ENCODE measurements at regions of chr6 and their contacts with region 1.

Region 1: GRCh38 chr6:1604158-1605030 is 5.3 kb upstream of the FOXC1 start:
- DNase-seq: peak in 37 of 42 donors; percentile 21 to 85 (median 66)

Region 2: DNA sequence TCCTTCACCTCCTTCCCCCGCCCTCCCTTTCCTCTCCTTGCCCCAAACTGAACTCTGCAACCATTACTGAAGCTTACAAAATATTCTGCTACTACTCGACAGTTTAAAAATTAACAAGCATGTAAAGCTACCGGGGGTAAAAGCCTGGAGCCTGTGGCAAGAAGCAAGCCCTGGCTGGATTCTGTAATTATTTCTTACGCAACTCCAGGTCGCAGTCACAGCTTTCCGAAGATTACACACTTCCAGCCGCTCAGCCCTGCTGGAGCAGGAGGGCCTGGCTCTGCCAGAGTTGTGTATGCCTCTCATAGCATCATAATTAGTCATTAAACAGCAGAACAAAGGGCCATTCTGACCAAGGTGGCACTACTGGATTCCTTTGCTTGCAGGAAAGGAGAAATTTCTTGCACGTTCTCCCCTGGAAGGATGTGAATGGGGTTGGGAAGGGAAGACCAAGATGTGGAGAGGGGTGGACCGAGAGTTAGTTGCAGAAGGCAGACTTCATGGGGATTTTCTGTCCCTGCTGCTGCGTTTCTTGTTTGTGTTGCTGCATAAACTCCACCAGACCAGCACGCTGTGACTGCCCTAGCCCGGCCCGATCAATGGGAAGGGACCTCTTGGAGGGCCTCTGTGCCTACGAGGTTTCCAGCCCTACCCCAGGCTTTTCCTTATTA is 268.9 kb before region 1 on chr6:
- intact Hi-C with region 1: no loop called
- DNase-seq: no peak

Region 3: DNA sequence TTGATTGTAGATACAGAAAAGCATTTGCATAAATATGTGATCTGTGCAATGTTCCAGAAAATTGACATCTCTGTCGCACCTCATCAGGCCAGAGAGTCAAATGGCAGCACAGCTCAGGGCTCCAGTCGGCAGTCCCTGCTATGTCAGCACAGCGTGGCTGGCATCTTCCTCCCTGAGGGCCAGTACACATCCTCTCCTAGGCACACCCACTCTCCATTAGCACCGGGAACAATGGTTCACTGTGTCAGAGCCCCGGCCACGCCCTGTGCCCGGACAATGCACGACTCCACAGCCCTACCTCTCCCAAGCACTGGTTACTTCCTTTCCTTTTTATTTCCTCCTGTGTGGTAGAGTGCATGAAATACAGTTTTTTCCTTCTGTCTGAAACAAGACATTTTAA is 120.2 kb after region 1 on chr6:
- intact Hi-C with region 1: no loop called
- DNase-seq: no peak

Region 4: GRCh38 chr6:2196079-2196679 is 591.8 kb after region 1 on chr6:
- intact Hi-C with region 1: loop called (anchors 5 kb)
- DNase-seq: peak in 12 of 42 donors; percentile 7 to 62 (median 22)

Region 5: DNA sequence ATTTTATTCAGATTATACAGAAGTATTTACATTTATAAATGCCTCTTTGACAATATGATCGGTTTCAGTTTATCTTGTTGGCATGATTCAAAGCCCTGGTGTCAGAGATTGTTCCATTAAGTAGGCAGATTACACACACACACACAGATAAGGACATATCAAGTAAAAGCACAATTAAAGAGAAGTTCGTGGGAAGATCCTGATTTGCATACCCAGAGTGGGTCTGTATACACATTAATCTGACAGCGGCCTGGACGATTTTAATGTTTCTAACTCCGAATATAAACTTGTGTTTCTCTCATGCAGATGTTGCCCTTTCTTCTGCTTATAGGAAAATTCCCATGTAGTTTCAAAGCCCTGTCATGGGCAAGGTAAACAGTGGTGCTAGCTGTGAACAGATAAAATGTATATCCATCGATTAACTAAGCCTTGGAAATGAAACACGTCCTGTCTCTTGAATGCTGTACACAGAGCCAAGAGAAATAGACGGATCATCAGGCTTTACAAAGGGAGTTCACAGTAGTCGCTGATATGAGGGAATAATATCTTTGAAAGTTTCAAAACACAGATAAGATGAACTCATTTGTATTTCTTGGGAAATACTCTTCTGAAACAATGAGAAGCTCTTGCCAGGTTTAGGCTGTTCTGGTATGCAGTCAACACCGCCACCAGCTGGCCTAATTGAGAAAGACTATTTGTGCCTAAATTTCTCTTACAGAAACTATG is 749.2 kb after region 1 on chr6:
- intact Hi-C with region 1: loop called (anchors 5 kb)
- DNase-seq: peak; percentile 31 to 87 (median 68)

Measured in head of caudate nucleus (tissue), 42 donors.